ENCODE measurements at regions of chr2 and their contacts with region 1.

Region 1: DNA sequence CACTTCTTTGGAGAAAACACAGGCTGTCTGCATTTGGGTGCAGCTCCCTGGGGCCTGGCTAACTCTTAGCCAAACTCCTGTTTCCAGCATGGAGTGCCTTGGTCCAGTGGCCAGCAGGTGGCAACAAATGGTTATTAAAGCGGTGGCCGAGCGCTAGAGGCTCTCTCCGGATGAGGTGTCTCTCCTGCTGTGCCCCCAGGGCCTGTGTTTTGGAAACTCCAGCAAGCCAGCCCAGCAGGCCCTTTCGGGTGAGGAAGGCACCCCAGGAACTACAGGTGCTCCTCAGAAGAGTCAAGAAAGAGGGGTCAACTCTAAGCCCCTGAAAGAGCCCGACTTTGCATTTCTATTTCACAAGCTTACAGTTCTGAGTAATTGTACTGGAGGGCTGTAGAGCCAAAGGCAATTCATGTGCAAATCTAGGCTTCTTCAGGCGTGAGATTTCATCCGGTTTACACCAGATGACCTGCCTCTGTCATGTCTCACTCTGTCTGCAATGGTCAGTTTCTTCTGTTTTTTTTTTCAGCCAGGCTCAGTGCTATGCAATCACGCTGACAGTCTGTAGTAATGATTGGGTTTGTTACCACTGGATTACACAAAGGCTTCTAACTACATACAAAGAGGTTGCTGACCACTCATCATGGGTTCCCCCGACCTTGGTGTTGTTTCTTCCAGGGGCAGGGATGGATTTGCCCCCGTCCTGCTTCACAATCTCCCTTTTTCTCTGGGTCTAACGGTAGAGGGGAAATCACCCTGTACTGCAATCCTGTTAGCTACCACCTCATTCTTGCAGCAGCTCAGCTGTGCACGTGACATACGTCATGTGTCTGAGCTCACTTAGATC is 7.6 kb upstream of the CHRNA1 start:
- DNase-seq: peak; percentile 71 to 85 (median 73)
- H3K4me3 ChIP-seq: no peak overlapping the region
- H3K27ac ChIP-seq: no peak overlapping the region
- H3K4me1 ChIP-seq: peaks cover 3% of the 10 kb centered on the region
- H3K27me3 ChIP-seq: no peaks in the 10 kb centered on the region
- CTCF ChIP-seq: peak; percentile 27 to 79 (median 62)
- EP300 ChIP-seq: no peak
- POLR2A ChIP-seq: no peak

Region 2: DNA sequence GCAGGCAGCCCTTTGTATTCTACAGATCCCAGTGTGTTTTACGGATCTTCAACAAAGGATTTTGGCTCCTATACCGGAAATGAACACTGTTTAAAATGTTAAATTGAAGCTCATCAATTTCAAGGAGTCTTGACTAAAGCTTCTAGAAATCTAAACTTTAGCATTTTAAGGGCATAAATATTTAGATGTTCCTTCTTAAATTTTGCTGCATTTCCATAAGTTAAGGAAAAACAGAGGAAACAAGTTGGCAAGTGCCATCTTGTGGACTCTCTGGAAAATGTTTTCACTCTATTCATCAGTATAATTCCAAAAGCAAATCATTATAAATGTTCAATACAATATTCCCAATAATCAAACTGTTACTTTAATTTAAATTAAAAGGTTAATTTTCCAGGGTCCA is 213.8 kb after region 1 on chr2:
- intact Hi-C with region 1: loop called (anchors 5 to 10 kb)
- DNase-seq: no peak
- H3K4me3 ChIP-seq: no peak overlapping the region
- H3K27ac ChIP-seq: no peak overlapping the region
- H3K4me1 ChIP-seq: no peaks in the 10 kb centered on the region
- H3K27me3 ChIP-seq: no peaks in the 10 kb centered on the region
- CTCF ChIP-seq: peak in 2 of 3 donors; percentile 19 to 31
- EP300 ChIP-seq: no peak
- POLR2A ChIP-seq: no peak

Region 3: GRCh38 chr2:174997110-174997509 is 225.3 kb after region 1 on chr2:
- intact Hi-C with region 1: loop called in 1 of 4 experiments (anchors 10 kb)
- DNase-seq: no peak
- H3K4me3 ChIP-seq: no peak overlapping the region
- H3K27ac ChIP-seq: no peak overlapping the region
- H3K4me1 ChIP-seq: no peaks in the 10 kb centered on the region
- H3K27me3 ChIP-seq: no peaks in the 10 kb centered on the region
- CTCF ChIP-seq: no peak
- EP300 ChIP-seq: no peak
- POLR2A ChIP-seq: no peak

Measured in ovary (tissue), 10 donors.